ENCODE measurements at regions of chr7 and their contacts with region 1.

Region 1: GRCh38 chr7:39580149-39580874 is 14.1 kb downstream of the YAE1 start:
- DNase-seq: peak; percentile 69 to 81
- H3K4me3 ChIP-seq: no peak overlapping the region
- H3K27ac ChIP-seq: no peak overlapping the region
- H3K4me1 ChIP-seq: no peaks in the 10 kb centered on the region
- H3K27me3 ChIP-seq: no peaks in the 10 kb centered on the region
- CTCF ChIP-seq: peak; percentile 84 to 91

Region 2: DNA sequence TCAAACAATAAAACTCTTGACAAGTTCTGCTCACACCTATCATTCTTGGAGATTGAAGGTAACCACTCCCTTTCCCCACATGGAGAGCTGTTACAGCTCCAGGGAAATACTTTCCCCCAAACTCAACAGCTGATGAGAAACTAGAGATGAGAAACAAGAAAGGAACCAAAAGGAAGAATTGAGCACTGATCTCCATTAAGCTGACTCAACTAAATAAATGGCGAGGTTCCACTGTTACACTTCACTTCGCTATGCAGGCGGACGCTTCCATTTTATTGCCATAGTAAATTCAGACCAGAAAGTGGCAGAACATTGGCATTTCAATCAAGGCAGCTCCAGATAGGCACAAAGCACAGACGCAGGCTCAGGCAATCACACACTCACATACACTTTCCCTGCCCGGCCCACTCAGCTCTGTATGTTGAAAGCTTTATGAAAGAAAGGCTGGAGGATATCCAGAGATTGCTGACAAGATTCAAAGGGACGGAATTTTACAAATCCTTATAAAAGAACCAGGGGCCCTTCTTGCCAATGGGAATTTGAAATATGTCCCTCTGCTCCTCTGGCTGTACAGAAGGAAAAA is 25.6 kb before region 1 on chr7:
- intact Hi-C with region 1: no loop called
- DNase-seq: no peak
- H3K4me3 ChIP-seq: no peak overlapping the region
- H3K27ac ChIP-seq: no peak overlapping the region
- H3K4me1 ChIP-seq: no peaks in the 10 kb centered on the region
- H3K27me3 ChIP-seq: no peaks in the 10 kb centered on the region
- CTCF ChIP-seq: no peak

Region 3: DNA sequence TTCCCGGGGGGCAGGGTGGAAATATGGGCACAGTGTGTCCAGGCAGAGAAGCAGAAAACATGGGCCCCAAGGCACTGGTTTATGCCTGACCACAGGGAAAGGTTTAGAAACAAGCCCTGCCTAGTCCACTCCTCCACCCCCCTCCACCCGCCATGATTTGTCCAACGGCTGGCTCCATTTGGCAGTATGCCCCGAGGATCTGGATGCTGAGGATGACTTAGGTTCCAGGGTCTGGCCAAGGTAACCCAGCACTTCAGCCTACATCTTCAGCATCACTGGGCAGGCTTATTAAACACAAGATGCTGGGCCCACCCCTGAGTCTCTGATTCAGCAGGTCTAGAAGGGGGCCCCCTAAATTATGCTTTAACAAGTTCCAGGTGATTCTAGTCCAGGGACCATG is 165.0 kb after region 1 on chr7:
- intact Hi-C with region 1: loop called (anchors 1 kb)
- DNase-seq: no peak
- H3K4me3 ChIP-seq: no peak overlapping the region
- H3K27ac ChIP-seq: no peak overlapping the region
- H3K4me1 ChIP-seq: no peaks in the 10 kb centered on the region
- H3K27me3 ChIP-seq: no peaks in the 10 kb centered on the region
- CTCF ChIP-seq: no peak

Measured in tibial artery (tissue), 4 donors.